Mammary epithelial cell (primary cell): ENCODE measurements at regions of chr7 and their contacts with region 1.

Region 1: DNA sequence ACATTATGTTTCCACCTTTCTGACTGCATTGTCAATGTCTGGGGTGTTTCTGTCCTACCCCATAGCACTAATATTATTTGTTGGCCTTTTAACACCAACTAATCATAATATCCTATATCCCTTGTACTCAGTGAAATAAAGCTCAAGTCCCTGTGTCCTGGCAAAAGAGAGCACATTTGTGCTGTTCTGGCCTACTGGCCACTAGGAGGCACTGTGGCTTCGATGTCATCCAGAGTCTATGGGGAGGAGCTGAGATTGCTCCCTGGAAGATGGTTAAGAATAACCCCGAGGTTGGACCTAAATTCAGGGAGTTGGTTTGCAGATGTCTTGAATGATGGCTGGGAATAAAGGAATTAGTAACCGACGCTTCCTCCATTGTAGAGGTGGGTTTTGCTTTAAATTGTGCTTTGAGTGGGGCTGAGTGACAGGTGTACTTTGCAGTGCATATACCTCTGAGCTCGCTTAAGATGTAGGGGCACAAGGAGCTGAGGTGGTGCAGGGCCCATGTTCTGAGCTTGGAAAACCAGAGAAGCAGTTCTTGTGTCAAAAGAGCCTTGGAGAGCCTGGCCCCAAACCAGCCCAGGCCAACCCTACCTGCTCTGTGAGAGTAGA is 191.2 kb upstream of the PRSS1 start:
- DNase-seq: peak; percentile 28
- H3K4me3 ChIP-seq: no peak overlapping the region
- H3K27ac ChIP-seq: peak overlapping the region; percentile 88
- H3K4me1 ChIP-seq: peaks cover 42% of the 10 kb centered on the region
- H3K27me3 ChIP-seq: no peaks in the 10 kb centered on the region
- CTCF ChIP-seq: peak; percentile 70 to 93

Region 2: GRCh38 chr7:142612237-142612881 is 54.3 kb after region 1 on chr7:
- CTCF ChIA-PET with region 1: interaction called, 10 read pairs
- dilution Hi-C with region 1: loop called (anchors 5 kb)
- in situ Hi-C with region 1: no loop called
- intact Hi-C with region 1: no loop called
- DNase-seq: peak; percentile 10
- H3K4me3 ChIP-seq: no peak overlapping the region
- H3K27ac ChIP-seq: no peak overlapping the region
- H3K4me1 ChIP-seq: peaks cover 14% of the 10 kb centered on the region
- H3K27me3 ChIP-seq: no peaks in the 10 kb centered on the region
- CTCF ChIP-seq: no peak